Testis (tissue), 5 donors: ENCODE measurements at regions of chr3 and their contacts with region 1.

Region 1: GRCh38 chr3:149393345-149394160 is 16.1 kb upstream of the TM4SF1 start:
- DNase-seq: peak; percentile 86
- H3K4me3 ChIP-seq: no peak overlapping the region
- H3K27ac ChIP-seq: no peak overlapping the region
- H3K4me1 ChIP-seq: peaks cover 6% of the 10 kb centered on the region
- H3K27me3 ChIP-seq: no peaks in the 10 kb centered on the region
- CTCF ChIP-seq: peak; percentile 60 to 72 (median 64)
- POLR2A ChIP-seq: no peak

Region 2: GRCh38 chr3:149044339-149045083 is 349.0 kb before region 1 on chr3:
- intact Hi-C with region 1: no loop called
- DNase-seq: no peak
- H3K4me3 ChIP-seq: no peak overlapping the region
- H3K27ac ChIP-seq: no peak overlapping the region
- H3K4me1 ChIP-seq: no peaks in the 10 kb centered on the region
- H3K27me3 ChIP-seq: no peaks in the 10 kb centered on the region
- CTCF ChIP-seq: no peak
- POLR2A ChIP-seq: no peak

Region 3: DNA sequence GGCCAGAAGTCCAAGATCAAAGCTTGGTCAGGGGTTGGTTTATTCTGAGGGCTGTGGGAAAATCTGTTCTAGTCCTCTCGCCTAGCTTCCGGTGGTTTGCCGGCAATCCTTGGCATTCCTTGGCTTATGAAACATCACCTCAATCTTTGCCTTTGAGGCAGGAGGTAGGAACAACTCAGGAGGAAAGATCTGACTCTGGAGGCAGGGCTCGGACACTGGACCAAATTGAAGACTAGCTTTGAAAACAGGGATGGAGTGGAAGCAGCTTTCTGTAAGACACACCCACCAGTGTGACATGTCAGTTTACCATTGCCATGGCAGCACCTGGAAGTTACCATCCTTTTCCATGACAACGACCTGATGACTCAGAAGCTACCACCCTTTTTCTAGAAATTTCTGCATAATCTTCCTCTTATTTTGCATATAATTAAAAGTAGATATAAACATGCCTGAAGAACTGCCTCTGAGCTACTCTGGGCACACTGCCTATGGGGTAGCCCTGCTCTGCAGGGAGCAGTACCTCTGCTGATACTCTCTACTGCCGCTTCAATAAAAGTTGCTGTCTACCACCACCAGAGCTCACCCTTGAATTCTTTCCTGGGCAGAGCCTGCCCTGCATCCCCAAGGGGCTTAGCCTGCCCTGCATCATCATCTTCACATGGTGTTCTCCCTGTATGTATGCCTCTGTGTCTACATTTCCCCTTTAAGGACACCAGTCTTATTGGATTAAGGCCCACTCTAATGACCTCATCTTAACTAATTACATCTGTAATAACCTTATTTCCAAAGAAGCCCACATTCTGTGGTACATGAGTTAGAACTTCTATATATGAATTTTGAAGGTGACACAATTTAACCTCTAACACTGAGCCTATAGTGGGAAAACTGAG is 42.7 kb after region 1 on chr3:
- intact Hi-C with region 1: no loop called
- DNase-seq: no peak
- H3K4me3 ChIP-seq: no peak overlapping the region
- H3K27ac ChIP-seq: peak overlapping the region in 1 of 2 donors; percentile 6
- H3K4me1 ChIP-seq: no peaks in the 10 kb centered on the region
- H3K27me3 ChIP-seq: no peaks in the 10 kb centered on the region
- CTCF ChIP-seq: no peak
- POLR2A ChIP-seq: no peak

Region 4: GRCh38 chr3:149480325-149481017 is 86.9 kb after region 1 on chr3:
- intact Hi-C with region 1: loop called (anchors 10 kb)
- DNase-seq: peak; percentile 90
- H3K4me3 ChIP-seq: no peak overlapping the region
- H3K27ac ChIP-seq: peak overlapping the region; percentile 45 to 53
- H3K4me1 ChIP-seq: peaks cover 11% of the 10 kb centered on the region
- H3K27me3 ChIP-seq: no peaks in the 10 kb centered on the region
- CTCF ChIP-seq: peak; percentile 59 to 83 (median 75)
- POLR2A ChIP-seq: no peak